ENCODE measurements at regions of chr11 and their contacts with region 1.

Region 1: GRCh38 chr11:124622531-124623451 is at the start of gene TBRG1:
- DNase-seq: peak; percentile 92
- ATAC-seq: peak; percentile 99
- H3K4me3 ChIP-seq: peak within 1 kb of the TSS; percentile 88 to 98 (median 96)
- H3K27ac ChIP-seq: peak within 1 kb of the TSS; percentile 90
- H3K4me1 ChIP-seq: peaks cover 29% of the 10 kb centered on the region
- H3K27me3 ChIP-seq: peaks cover 0 to 15% of the 10 kb centered on the region in 2 experiments; a peak in 2 of 5 replicates
- CTCF ChIP-seq: 0 out of 2 replicates have a peak, but pooled peaks have one; percentile 16
- EP300 ChIP-seq: no peak
- POLR2A ChIP-seq: peak; percentile 95 to 97
- RAD21 ChIP-seq: peak; percentile 32; the same call in 1 of the 2 replicates
- total RNA-seq, gene TBRG1: 20.3 and 21.7 TPM in 2 replicates

Region 2: GRCh38 chr11:124633355-124633754 is 10.6 kb after region 1 on chr11:
- CTCF ChIA-PET with region 1: no interaction called
- POLR2A ChIA-PET with region 1: interaction called, 10 read pairs
- in situ Hi-C with region 1: no loop called
- intact Hi-C with region 1: no loop called
- DNase-seq: no peak
- ATAC-seq: peak; percentile 87
- H3K4me3 ChIP-seq: no peak overlapping the region
- H3K27ac ChIP-seq: no peak overlapping the region
- H3K4me1 ChIP-seq: no peaks in the 10 kb centered on the region
- H3K27me3 ChIP-seq: no peaks in the 10 kb centered on the region
- CTCF ChIP-seq: no peak
- EP300 ChIP-seq: no peak
- POLR2A ChIP-seq: no peak
- RAD21 ChIP-seq: no peak